Activated CD4-positive, alpha-beta memory T cell treated with anti-CD3 and anti-CD28 coated beads, Interleukin-2, amount 10 ng/mL, durations not matched to agents 7 days and 5 days (primary cell): ENCODE measurements at regions of chr4 and their contacts with region 1.

Region 1: GRCh38 chr4:118772081-118772766 is 63.7 kb downstream of the SEC24D start:
- DNase-seq: no peak
- H3K4me3 Mint-ChIP-seq: no peak overlapping the region
- H3K27ac Mint-ChIP-seq: no peak overlapping the region
- H3K4me1 Mint-ChIP-seq: no peaks in the 10 kb centered on the region
- H3K27me3 Mint-ChIP-seq: no peaks in the 10 kb centered on the region

Region 2: GRCh38 chr4:118557298-118557851 is 214.8 kb before region 1 on chr4:
- CTCF ChIA-PET with region 1: no interaction called
- POLR2A ChIA-PET with region 1: no interaction called
- DNase-seq: no peak
- H3K4me3 Mint-ChIP-seq: no peak overlapping the region
- H3K27ac Mint-ChIP-seq: no peak overlapping the region
- H3K4me1 Mint-ChIP-seq: no peaks in the 10 kb centered on the region
- H3K27me3 Mint-ChIP-seq: peaks cover 15% of the 10 kb centered on the region

Region 3: GRCh38 chr4:118865091-118865708 is 93.0 kb after region 1 on chr4:
- CTCF ChIA-PET with region 1: interaction called, 14 read pairs
- POLR2A ChIA-PET with region 1: no interaction called
- DNase-seq: no peak
- H3K4me3 Mint-ChIP-seq: no peak overlapping the region
- H3K27ac Mint-ChIP-seq: no peak overlapping the region
- H3K4me1 Mint-ChIP-seq: peaks cover 2% of the 10 kb centered on the region
- H3K27me3 Mint-ChIP-seq: peaks cover 5% of the 10 kb centered on the region

Region 4: DNA sequence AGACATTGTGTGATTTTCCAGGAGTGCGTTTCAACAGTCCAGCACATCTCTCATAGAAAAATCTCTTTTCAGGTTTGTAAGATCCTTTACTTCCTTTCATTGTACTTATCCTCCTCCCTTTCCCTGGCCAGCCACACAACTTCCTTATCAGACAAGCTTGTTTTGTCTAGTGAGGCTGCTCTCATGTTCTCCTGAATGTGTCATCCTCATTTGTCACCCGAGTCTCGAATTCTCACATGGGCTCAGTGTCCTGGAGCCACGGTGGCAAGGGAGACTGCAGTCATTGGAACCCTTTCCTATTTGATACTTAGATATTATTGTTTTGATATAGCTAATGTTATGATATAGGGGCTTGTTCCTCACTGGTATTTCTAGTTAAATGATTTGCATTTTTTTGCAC is 133.3 kb after region 1 on chr4:
- CTCF ChIA-PET with region 1: no interaction called
- POLR2A ChIA-PET with region 1: no interaction called
- DNase-seq: no peak
- H3K4me3 Mint-ChIP-seq: no peak overlapping the region
- H3K27ac Mint-ChIP-seq: no peak overlapping the region
- H3K4me1 Mint-ChIP-seq: no peaks in the 10 kb centered on the region
- H3K27me3 Mint-ChIP-seq: peaks cover 25% of the 10 kb centered on the region

Region 5: GRCh38 chr4:119189638-119190037 is 417.4 kb after region 1 on chr4:
- CTCF ChIA-PET with region 1: no interaction called
- POLR2A ChIA-PET with region 1: no interaction called
- DNase-seq: no peak
- H3K4me3 Mint-ChIP-seq: no peak overlapping the region
- H3K27ac Mint-ChIP-seq: no peak overlapping the region
- H3K4me1 Mint-ChIP-seq: no peaks in the 10 kb centered on the region
- H3K27me3 Mint-ChIP-seq: peaks cover 3% of the 10 kb centered on the region